HepG2 (cell line): ENCODE measurements at regions of chrX and their contacts with region 1.

Region 1: DNA sequence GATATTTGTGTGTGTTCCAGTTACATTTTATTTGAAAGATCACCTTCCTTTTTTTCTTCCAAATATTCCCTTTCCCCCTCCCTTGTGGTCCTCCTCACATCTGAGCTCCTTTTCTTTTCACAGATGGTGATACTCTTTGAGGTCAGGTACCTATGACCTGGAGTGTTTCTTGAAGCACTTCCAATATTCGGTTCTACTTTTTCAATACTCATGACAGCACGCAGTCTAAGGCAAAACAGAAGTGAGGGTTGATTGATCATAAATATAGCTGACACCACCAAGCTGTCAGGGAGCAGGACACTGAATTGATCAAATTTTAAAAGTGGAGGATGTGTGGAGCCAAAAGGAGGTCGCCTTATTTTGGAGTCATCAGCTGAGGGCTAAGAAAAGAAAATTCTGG is 334.4 kb upstream of the MAGEB2 start:
- DNase-seq: no peak
- ATAC-seq: no peak
- H3K4me3 ChIP-seq: no peak overlapping the region
- H3K27ac ChIP-seq: no peak overlapping the region
- H3K4me1 ChIP-seq: no peaks in the 10 kb centered on the region
- H3K27me3 ChIP-seq: no peaks in the 10 kb centered on the region
- CTCF ChIP-seq: no peak
- EP300 ChIP-seq: no peak
- POLR2A ChIP-seq: no peak
- RAD21 ChIP-seq: no peak

Region 2: DNA sequence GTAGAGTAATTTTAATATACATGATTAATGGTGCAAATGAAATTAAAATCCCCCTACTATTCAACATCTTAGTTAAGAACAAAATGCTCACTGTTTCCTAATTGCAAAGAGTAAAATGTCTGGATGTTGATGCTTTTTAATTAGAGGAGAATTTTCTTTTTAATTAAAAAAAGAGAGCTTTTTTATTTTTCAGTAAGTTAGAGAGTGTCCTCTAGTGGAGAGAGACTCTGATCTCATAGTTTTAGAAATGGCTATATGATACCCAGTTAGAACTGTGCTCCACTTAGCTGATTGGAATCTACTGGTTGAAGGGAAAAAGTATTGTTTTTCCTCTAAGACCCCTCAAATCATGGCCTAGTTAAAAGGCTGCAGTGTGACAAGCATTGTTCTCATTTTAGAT is 22.4 kb after region 1 on chrX:
- CTCF ChIA-PET with region 1: no interaction called
- POLR2A ChIA-PET with region 1: no interaction called
- in situ Hi-C with region 1: no loop called
- intact Hi-C with region 1: loop called (anchors 1 kb)
- DNase-seq: no peak
- ATAC-seq: no peak
- H3K4me3 ChIP-seq: no peak overlapping the region
- H3K27ac ChIP-seq: no peak overlapping the region
- H3K4me1 ChIP-seq: no peaks in the 10 kb centered on the region
- H3K27me3 ChIP-seq: no peaks in the 10 kb centered on the region
- CTCF ChIP-seq: no peak
- EP300 ChIP-seq: no peak
- POLR2A ChIP-seq: no peak
- RAD21 ChIP-seq: no peak